ENCODE measurements at regions of chr6 and their contacts with region 1.

Region 1: DNA sequence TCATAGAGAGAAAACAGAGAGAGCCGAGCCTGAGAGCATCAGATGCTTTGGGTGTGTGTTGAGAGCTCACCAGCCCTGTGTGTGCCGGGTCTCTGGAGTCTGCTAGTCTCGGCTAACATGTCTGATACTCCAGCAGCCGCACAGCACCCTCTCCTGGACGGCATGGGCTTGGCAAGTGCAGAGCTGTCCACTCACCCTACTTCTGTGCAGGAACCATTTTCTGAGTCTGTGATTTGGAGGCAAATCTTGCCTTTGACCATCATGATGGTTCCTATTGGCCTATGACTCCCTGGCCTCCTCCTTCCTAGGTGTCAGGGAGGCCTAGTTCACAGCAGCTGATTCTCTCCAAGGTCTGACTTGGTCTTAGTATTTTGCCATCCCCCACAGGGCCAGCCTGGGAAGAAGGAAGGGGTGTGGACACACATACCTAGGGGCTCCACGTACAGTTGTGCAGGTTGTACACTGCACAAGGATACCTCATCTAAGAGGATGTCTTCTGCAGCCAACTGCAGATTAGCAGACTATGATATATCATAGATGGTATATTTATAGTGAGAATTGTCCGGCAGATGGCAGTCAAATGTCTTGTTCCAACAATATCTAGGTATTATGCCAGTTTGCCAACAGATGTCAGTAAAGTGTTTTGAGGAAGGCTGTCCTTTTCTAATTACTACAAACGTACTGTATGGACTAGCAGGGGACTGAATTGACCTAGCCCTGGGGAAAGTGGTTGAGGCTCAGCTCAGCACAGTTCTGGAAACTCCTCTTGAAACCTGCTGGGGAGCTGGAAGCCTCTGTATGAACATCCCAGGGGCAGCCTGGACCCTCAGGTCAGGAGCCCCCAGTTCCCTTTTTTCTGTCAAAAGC is 13.0 kb downstream of the FGD2 start:
- DNase-seq: peak; percentile 84
- H3K4me3 Mint-ChIP-seq: no peak overlapping the region
- H3K27ac Mint-ChIP-seq: peak overlapping the region; percentile 56
- H3K4me1 Mint-ChIP-seq: peaks cover 58% of the 10 kb centered on the region
- H3K27me3 Mint-ChIP-seq: no peaks in the 10 kb centered on the region

Region 2: DNA sequence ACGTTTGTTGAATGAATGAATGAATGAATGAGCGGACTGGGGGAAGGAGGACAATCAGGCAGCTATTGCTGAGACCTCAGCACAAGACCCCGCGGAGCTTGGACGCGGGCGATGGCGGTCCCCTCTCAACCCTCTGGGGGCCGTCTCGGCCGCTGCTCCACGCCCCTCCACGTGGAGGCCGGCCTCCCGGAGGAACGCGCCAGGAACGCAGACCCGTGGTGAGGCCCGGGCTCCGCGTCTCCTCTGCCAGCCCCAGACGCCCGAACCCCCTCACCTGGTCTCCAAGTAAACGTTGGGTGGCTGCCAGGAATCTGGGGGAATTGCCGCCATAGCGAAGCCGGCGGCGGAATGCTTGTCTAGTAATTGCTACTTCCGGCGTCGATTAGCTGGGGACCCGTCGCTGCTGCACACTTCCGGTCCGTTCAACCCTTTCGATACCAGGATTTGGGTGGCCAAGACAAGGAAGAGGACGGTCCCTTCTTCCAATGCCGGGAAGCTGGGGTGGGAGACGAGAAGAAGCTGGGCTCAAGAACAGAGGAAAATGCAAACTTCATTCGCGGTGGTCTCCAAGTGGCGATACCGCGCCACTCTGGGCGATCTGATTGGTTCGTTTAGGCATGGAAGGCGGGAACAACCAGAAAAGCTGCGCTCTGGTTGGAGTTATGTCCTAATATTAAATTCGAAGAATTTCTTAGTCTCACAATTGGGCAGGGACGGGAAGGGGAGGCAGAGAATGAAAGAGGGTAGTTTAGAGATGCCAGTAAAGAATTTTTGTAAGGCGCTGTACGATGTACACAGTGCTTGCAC is 143.8 kb before region 1 on chr6 and contains the start of gene PPIL1:
- intact Hi-C with region 1: loop called (anchors 1 kb)
- DNase-seq: peak; percentile 75
- H3K4me3 Mint-ChIP-seq: peak within 1 kb of the TSS; percentile 93
- H3K27ac Mint-ChIP-seq: peak within 1 kb of the TSS; percentile 99
- H3K4me1 Mint-ChIP-seq: peaks cover 47% of the 10 kb centered on the region
- H3K27me3 Mint-ChIP-seq: peaks cover 2% of the 10 kb centered on the region
- total RNA-seq, gene PPIL1: 60.2 and 62.6 TPM in 2 replicates

Region 3: DNA sequence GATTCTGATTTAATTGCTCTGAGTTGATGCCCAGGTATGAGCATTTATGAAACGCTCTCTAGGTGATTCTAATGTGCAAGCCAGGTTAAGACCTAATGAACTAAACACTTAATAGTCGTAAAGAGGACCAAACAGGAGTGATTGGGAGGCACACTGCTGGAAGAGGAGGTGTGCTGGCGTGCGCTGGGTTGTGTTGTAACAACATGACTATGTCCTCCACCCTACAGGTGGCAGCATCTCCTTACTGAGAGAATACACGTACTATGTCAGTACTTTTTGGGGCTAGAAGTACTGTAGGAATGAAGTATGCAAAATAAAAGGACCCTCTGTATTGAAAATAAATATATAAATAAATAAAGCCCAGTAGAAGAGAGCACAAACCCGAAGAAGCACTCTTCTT is 120.8 kb before region 1 on chr6:
- intact Hi-C with region 1: loop called (anchors 1 kb)
- DNase-seq: no peak
- H3K4me3 Mint-ChIP-seq: no peak overlapping the region
- H3K27ac Mint-ChIP-seq: no peak overlapping the region
- H3K4me1 Mint-ChIP-seq: peaks cover 7% of the 10 kb centered on the region
- H3K27me3 Mint-ChIP-seq: no peaks in the 10 kb centered on the region

Region 4: GRCh38 chr6:36955671-36956445 is 62.6 kb before region 1 on chr6:
- intact Hi-C with region 1: no loop called
- DNase-seq: no peak
- H3K4me3 Mint-ChIP-seq: no peak overlapping the region
- H3K27ac Mint-ChIP-seq: no peak overlapping the region
- H3K4me1 Mint-ChIP-seq: peaks cover 51% of the 10 kb centered on the region
- H3K27me3 Mint-ChIP-seq: peaks cover 2% of the 10 kb centered on the region

Region 5: DNA sequence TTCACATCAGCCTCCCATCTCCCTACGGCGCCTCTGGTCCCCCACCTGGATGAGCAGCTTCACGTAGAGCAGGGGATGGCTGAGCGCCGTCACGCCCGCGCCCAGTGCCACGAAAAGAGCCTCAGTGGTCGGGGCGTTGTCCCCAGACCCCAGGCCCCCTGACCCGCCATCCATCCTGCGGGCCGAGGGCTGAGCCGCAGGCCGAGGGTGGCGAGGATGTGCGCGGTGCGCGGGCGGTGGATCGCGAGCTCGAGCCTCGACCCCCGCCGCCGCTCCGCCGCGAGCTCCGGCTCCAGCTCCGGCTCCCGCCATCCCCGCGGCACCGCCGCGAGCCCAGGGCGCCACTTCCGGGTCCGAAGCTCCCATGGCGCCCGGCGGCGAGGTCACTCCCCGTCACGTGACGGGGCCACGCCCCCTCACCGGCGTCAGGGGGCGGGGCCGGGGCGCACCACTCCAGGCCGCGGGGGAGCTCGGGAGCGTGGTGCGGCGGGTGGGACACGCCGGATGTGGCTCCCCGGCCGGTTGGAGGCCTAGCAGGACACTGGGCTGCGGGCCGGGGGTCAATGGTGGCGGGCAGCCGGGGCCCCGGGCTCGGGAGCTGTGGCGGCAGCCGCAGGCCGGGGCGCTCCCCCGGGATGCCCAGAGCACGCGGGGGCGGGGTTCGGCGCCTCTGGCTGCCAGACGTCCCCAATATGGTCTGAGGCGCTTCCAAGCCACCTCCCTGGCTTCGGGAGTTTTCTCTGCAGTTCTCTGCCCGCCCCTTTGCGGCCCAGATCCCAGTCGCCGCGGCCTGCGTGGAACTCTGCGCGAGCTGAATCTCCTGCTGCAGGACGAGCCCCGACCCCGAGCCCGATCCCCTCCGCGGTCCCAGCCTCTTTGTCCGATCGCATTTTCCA is 32.4 kb before region 1 on chr6 and contains the start of gene MTCH1:
- intact Hi-C with region 1: loop called (anchors 1 kb)
- DNase-seq: peak; percentile 87
- H3K4me3 Mint-ChIP-seq: peak within 1 kb of the TSS; percentile 99
- H3K27ac Mint-ChIP-seq: peak within 1 kb of the TSS; percentile 99
- H3K4me1 Mint-ChIP-seq: peaks cover 27% of the 10 kb centered on the region
- H3K27me3 Mint-ChIP-seq: peaks cover 10% of the 10 kb centered on the region
- total RNA-seq, gene MTCH1: 120 and 127 TPM in 2 replicates

Region 6: DNA sequence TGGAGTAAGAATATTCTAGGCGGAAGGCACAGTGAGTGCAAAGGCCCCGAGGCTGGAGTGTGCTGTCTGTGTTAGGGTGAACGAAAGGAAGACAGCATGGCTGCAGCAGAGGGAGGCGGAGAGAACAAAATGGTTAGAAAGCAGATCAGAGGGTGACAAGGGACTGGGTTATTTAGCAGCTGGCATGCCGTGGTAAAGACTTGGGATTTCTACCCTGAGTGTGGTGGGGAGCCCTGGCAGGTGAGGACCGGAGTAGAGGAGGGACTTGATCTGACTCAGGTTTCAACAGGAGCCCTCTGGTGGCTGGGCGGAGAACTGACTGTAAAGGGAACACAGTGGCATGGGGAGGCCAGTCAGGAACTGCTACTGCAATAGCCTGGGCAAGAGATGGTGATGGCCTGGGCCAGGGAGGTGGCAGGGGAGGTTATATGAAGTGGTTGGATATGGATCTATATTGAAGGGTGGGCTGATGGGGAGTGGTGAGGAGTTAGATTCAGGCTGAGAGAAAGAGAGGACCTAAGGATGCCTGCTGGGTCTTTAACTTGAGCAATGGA is 189.5 kb after region 1 on chr6:
- intact Hi-C with region 1: loop called (anchors 1 kb)
- DNase-seq: peak; percentile 83
- H3K4me3 Mint-ChIP-seq: peak overlapping the region; percentile 37
- H3K27ac Mint-ChIP-seq: peak overlapping the region; percentile 86
- H3K4me1 Mint-ChIP-seq: peaks cover 61% of the 10 kb centered on the region
- H3K27me3 Mint-ChIP-seq: no peaks in the 10 kb centered on the region

Region 7: DNA sequence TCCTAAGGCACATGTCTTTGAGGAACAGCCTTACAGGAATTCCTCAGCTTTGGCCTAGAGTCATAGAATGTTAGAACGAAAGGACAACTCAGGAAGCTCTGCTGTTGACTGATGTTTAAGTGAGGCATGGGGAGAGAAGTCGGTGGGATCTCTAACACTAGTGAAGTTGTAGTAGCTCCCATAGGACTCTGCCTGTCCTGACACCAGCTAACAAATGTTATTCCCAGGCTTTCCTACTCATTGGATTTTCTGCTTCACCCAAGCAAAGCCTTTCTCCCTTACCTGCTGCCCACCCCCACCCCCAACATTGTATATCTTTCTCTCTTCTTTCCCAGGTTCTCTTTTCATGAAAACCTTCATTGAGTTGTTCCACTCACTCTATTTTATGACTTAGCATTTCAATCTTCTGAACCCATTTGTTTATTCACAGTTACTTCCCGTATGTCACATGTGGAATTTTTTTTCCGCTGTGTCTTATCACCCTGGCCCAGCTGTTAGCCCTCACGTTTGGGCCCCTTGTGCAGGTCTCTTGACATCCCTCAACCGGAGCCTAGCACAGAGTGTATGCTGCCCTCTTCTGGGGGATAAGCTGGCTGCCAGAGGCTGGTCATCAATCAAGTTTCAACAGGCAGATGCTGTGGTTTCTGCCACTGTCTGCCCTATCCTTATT is 296.2 kb after region 1 on chr6:
- intact Hi-C with region 1: loop called (anchors 1 kb)
- DNase-seq: peak; percentile 35
- H3K4me3 Mint-ChIP-seq: no peak overlapping the region
- H3K27ac Mint-ChIP-seq: peak overlapping the region; percentile 32
- H3K4me1 Mint-ChIP-seq: peaks cover 28% of the 10 kb centered on the region
- H3K27me3 Mint-ChIP-seq: no peaks in the 10 kb centered on the region